Activated T-helper 2 cell treated with anti-CD3 and anti-CD28 coated beads, Interferon-gamma antibody, Interleukin-2, Interleukin-4, amounts not matched to agents 10 μg/mL and 5 μg/mL and 100 μg/mL, durations not matched to agents 14 hours and 24 hours and 36 hours (primary cell): ENCODE measurements at regions of chr7 and their contacts with region 1.

Region 1: DNA sequence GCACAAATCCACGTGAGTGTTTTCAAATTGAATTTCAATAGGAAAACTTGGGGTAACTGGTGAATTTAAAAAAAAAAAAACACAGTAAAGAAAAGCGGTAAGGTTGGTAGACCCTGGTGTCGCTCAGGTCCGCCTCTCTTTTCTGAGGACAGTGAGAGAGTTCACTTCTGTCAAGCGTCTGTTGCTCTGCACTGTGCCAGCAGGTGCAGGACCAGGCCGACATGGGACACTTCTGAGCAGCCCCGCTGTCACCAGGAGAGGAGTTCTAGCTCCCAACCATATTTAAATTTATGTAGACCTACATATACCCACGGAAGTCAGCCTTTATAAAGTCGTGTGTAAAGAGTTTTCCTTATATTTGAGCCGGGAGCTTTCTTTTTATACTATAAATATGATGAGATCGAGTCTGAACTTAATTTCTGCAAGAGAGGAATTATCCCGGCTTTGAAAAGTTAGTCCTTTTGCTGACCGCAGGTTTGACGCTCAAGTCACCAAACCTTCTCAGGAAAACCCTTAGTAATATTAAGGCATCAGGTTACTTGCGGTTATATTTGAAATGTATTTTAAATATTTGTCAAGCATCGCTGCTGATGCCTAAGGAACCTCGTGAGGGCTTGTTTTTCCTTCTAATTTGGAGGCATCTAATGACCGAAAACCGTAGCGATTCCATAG is 531 bp downstream of the IKZF1 start:
- DNase-seq: peak; percentile 56
- H3K4me3 Mint-ChIP-seq: peak overlapping the region; percentile 99
- H3K27ac Mint-ChIP-seq: peak overlapping the region; percentile 98
- H3K4me1 Mint-ChIP-seq: peaks cover 31% of the 10 kb centered on the region
- H3K27me3 Mint-ChIP-seq: no peaks in the 10 kb centered on the region

Region 2: DNA sequence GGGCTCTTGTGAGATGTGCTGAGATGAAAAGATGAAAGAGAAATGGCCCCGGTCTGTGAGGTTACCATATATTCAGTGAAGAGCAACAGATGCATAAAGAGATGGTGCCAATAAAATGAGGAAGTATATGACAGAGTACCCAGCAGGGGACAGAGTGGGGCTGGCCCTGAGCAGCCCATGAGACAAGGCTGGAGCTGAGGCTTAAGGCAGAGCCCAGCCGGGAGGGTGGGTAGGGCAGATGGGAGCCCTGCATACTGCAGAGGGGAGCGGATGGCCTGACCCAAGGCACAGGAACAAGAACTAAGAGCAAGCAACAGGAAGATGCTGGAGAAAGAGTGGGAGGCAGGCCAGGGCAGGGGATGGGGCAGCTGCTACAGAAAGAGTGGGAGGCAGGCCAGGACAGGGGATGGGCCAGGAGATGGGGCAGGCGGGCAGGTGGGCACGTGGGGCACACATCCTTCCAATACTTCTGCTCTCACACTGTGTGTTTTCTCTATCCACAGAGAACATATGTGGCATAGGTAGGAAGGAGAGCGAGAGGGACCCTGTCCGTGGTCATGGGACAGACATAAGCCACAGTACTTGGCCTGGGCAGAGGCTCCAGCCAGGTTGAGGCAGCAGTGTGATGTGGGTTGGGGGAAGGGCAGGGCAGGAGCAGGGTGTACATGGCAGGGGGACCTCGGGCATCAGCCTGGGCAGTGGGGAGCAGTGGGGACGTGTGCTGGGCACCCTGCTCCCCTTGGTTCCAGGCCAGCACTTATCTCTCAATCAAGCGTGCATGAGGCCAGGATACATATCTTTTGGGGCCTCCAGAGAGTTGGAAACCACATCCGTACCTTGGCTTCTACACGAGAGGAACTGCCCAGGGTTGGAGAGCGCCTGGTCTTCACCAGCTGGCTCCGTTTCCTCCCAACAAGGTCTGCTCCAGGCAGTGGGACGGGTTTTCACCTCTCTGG is 92.1 kb before region 1 on chr7:
- intact Hi-C with region 1: loop called (anchors 1 kb)
- DNase-seq: no peak
- H3K4me3 Mint-ChIP-seq: peak overlapping the region; percentile 64
- H3K27ac Mint-ChIP-seq: peak overlapping the region; percentile 92
- H3K4me1 Mint-ChIP-seq: peaks cover 90% of the 10 kb centered on the region
- H3K27me3 Mint-ChIP-seq: no peaks in the 10 kb centered on the region

Region 3: GRCh38 chr7:50293509-50294179 is 11.4 kb before region 1 on chr7:
- intact Hi-C with region 1: loop called (anchors 1 kb)
- DNase-seq: no peak
- H3K4me3 Mint-ChIP-seq: no peak overlapping the region
- H3K27ac Mint-ChIP-seq: no peak overlapping the region
- H3K4me1 Mint-ChIP-seq: peaks cover 34% of the 10 kb centered on the region
- H3K27me3 Mint-ChIP-seq: peaks cover 5% of the 10 kb centered on the region

Region 4: DNA sequence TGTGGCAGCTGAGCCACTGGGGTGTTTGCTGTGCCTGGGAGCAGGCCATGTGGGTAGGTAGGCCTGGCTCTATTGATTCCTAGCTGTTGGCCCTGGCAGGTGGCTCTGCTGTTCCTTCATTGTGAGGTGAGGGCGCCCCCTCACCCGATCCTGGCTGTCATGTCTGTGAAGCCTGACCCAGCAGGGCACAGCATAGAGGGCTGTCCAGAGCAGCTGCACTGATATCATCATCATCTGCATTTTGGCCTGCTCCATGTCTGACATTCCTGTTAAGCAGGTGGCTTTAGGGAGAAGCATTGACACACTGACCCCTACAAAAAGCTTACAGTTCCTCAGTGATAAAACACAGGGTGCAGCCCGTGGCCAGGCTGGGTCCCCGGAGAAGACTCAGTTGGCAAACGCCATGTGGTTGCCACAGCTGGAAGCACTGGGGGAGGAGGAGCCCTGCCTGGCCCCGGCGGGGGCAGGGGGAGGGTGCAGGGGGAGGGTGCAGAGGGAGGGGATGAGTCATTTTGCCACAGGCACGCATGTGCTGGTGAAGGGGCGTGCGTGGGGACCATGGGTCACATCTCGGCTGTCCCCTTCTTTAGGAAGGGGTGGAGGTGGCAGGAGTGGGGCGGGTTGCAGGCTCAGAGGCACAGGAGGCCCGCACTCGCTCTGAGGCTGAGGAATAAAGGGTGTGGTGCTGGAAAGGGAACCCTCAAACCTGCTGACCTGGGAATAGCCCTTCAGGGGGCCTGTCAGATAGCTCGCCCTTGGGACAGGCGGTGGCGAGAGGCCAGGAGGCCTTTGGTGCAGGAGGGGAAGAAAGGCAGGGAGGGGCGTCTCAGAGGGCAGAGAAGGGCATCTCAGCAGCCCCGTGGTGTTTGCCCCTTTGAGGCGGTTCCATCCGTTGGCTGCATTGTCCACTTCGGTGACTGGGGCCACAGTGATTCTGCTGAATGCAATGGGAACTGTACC is 31.0 kb after region 1 on chr7:
- intact Hi-C with region 1: loop called (anchors 1 kb)
- DNase-seq: peak; percentile 77
- H3K4me3 Mint-ChIP-seq: no peak overlapping the region
- H3K27ac Mint-ChIP-seq: no peak overlapping the region
- H3K4me1 Mint-ChIP-seq: peaks cover 62% of the 10 kb centered on the region
- H3K27me3 Mint-ChIP-seq: no peaks in the 10 kb centered on the region

Region 5: GRCh38 chr7:50369143-50370026 is 64.3 kb after region 1 on chr7:
- intact Hi-C with region 1: loop called (anchors 1 kb)
- DNase-seq: no peak
- H3K4me3 Mint-ChIP-seq: peak overlapping the region; percentile 45
- H3K27ac Mint-ChIP-seq: peak overlapping the region; percentile 94
- H3K4me1 Mint-ChIP-seq: peaks cover 95% of the 10 kb centered on the region
- H3K27me3 Mint-ChIP-seq: no peaks in the 10 kb centered on the region

Region 6: DNA sequence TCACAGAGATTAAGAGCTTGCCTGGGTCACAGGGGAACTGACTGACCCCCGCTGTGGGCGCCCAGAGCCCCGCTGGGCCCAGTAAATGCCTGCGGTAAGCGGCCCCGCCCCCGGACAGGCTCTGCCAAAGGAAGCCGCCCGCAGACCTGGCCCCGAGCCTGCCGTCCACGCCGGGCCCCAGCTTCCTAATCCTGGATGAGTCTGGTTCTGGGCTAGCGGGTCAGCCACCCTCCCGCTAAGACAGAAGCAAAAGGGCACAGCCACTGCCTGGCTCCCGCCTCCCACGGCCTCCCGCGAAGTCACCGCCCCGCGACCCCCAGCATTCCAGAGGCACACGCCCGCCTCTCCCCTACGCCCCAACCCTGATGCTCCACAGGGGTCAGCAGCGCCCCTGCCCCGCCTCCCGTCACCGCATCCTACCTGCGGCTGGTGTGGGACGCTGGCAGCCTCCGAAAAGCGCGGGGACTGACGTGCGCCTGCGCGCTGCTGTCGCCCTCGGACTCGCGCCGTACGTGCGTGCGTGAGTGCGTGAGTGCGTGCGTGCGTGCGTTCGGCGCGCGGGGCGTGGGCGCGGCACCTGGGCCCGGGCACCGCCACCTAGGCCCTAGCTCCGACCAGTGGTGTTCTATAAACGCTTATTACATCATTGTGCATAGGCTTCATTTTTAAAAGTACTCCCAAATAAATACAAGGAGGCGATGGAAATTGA is 145.0 kb after region 1 on chr7 and contains the start of gene FIGNL1:
- intact Hi-C with region 1: loop called (anchors 5 kb)
- DNase-seq: peak; percentile 81
- H3K4me3 Mint-ChIP-seq: peak within 1 kb of the TSS; percentile 86
- H3K27ac Mint-ChIP-seq: peak within 1 kb of the TSS; percentile 71
- H3K4me1 Mint-ChIP-seq: peaks cover 41% of the 10 kb centered on the region
- H3K27me3 Mint-ChIP-seq: no peaks in the 10 kb centered on the region
- total RNA-seq, gene FIGNL1: 40.0 and 42.5 TPM in 2 replicates